ENCODE measurements at regions of chr7 and their contacts with region 1.

Region 1: GRCh38 chr7:150448789-150449147 is 1.7 kb upstream of the GIMAP8 start:
- DNase-seq: peak; percentile 92
- H3K4me3 Mint-ChIP-seq: peak overlapping the region; percentile 97
- H3K27ac Mint-ChIP-seq: peak overlapping the region; percentile 93
- H3K4me1 Mint-ChIP-seq: peaks cover 55% of the 10 kb centered on the region
- H3K27me3 Mint-ChIP-seq: no peaks in the 10 kb centered on the region

Region 2: GRCh38 chr7:150388709-150389531 is 59.8 kb before region 1 on chr7:
- CTCF ChIA-PET with region 1: no interaction called
- POLR2A ChIA-PET with region 1: no interaction called
- DNase-seq: no peak
- H3K4me3 Mint-ChIP-seq: no peak overlapping the region
- H3K27ac Mint-ChIP-seq: no peak overlapping the region
- H3K4me1 Mint-ChIP-seq: no peaks in the 10 kb centered on the region
- H3K27me3 Mint-ChIP-seq: no peaks in the 10 kb centered on the region

Region 3: GRCh38 chr7:150428671-150429451 is 19.9 kb before region 1 on chr7:
- CTCF ChIA-PET with region 1: interaction called, 16 read pairs
- POLR2A ChIA-PET with region 1: no interaction called
- DNase-seq: no peak
- H3K4me3 Mint-ChIP-seq: no peak overlapping the region
- H3K27ac Mint-ChIP-seq: peak overlapping the region; percentile 48
- H3K4me1 Mint-ChIP-seq: peaks cover 24% of the 10 kb centered on the region
- H3K27me3 Mint-ChIP-seq: no peaks in the 10 kb centered on the region

Region 4: GRCh38 chr7:150481186-150481920 is 32.6 kb after region 1 on chr7:
- CTCF ChIA-PET with region 1: interaction called, 6 read pairs
- POLR2A ChIA-PET with region 1: interaction called, 11 read pairs
- DNase-seq: peak; percentile 68
- H3K4me3 Mint-ChIP-seq: peak overlapping the region; percentile 75
- H3K27ac Mint-ChIP-seq: peak overlapping the region; percentile 96
- H3K4me1 Mint-ChIP-seq: peaks cover 92% of the 10 kb centered on the region
- H3K27me3 Mint-ChIP-seq: no peaks in the 10 kb centered on the region

Region 5: DNA sequence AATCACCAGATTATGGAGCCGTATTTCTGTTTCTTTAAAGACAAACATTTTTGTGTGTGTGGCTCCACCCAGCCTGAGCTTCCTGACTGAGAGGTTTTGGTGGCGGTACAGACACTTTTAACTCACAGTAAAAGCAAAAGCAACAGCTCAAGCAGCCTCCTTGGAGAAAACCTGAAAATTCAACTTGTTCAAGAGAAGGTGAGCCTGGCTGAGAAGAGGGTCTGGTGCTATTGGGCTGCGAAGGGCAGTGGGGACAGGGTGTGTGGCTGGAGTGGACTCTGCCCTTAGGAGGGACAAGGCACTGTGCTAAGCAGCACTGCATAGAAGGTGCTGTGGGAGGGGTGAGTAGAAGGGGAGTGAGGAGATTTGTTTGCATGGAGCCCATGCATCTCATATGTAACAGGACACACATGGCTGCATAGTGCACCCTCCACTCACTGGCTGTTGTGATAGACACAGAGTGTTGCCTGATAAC is 66.0 kb after region 1 on chr7 and contains the start of gene GIMAP7:
- CTCF ChIA-PET with region 1: interaction called, 17 read pairs
- POLR2A ChIA-PET with region 1: interaction called, 45 read pairs
- DNase-seq: peak; percentile 86
- H3K4me3 Mint-ChIP-seq: peak within 1 kb of the TSS; percentile 98
- H3K27ac Mint-ChIP-seq: peak within 1 kb of the TSS; percentile 97
- H3K4me1 Mint-ChIP-seq: peaks cover 48% of the 10 kb centered on the region
- H3K27me3 Mint-ChIP-seq: no peaks in the 10 kb centered on the region
- total RNA-seq, gene GIMAP7: 239 to 244 TPM

Region 6: GRCh38 chr7:150567169-150567568 is 118.4 kb after region 1 on chr7 and contains the start of gene GIMAP4:
- CTCF ChIA-PET with region 1: interaction called, 27 read pairs
- POLR2A ChIA-PET with region 1: interaction called, 6 read pairs
- DNase-seq: peak; percentile 49
- H3K4me3 Mint-ChIP-seq: peak within 1 kb of the TSS; percentile 92
- H3K27ac Mint-ChIP-seq: peak within 1 kb of the TSS; percentile 94
- H3K4me1 Mint-ChIP-seq: peaks cover 73% of the 10 kb centered on the region
- H3K27me3 Mint-ChIP-seq: no peaks in the 10 kb centered on the region
- total RNA-seq, gene GIMAP4: 311 to 335 TPM

Region 7: DNA sequence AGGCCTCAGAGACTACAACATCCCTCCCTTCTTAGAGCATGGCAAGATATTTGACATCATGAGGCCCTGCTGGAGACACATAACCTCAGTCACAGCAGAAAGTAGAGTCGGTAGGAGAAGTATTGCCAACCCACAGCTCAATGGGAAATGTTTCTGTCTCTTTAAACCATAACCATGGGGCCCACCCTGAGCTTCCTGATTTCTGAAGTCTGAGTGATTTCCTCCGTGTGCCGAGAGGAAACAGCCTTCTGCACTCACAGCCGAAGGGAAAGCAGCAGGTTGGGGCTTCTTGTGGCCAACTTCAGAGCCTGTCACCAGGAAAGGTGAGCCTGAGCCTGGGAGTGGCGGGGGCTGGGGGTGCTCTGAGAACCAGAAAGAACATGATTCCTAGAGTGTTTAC is 267.6 kb after region 1 on chr7 and contains the start of gene GIMAP1:
- CTCF ChIA-PET with region 1: interaction called, 12 read pairs
- POLR2A ChIA-PET with region 1: interaction called, 4 read pairs
- DNase-seq: peak; percentile 75
- H3K4me3 Mint-ChIP-seq: peak within 1 kb of the TSS; percentile 96
- H3K27ac Mint-ChIP-seq: peak within 1 kb of the TSS; percentile 83
- H3K4me1 Mint-ChIP-seq: peaks cover 57% of the 10 kb centered on the region
- H3K27me3 Mint-ChIP-seq: no peaks in the 10 kb centered on the region
- total RNA-seq, gene GIMAP1: 18.1 to 19.6 TPM

Region 8: GRCh38 chr7:150753826-150754603 is 305.2 kb after region 1 on chr7:
- CTCF ChIA-PET with region 1: interaction called, 5 read pairs
- POLR2A ChIA-PET with region 1: interaction called, 10 read pairs
- DNase-seq: peak; percentile 40
- H3K4me3 Mint-ChIP-seq: peak overlapping the region; percentile 27
- H3K27ac Mint-ChIP-seq: peak overlapping the region; percentile 93
- H3K4me1 Mint-ChIP-seq: peaks cover 72% of the 10 kb centered on the region
- H3K27me3 Mint-ChIP-seq: peaks cover 2% of the 10 kb centered on the region